Endothelial cell of umbilical vein (primary cell): ENCODE measurements at regions of chr1 and their contacts with region 1.

Region 1: GRCh38 chr1:21508580-21509350 is 458 bp upstream of the ALPL start:
- DNase-seq: peak; percentile 8
- H3K4me3 ChIP-seq: no peak overlapping the region
- H3K27ac ChIP-seq: no peak overlapping the region
- H3K4me1 ChIP-seq: peaks cover 3% of the 10 kb centered on the region
- H3K27me3 ChIP-seq: peaks cover 51% of the 10 kb centered on the region in 2 experiments
- CTCF ChIP-seq: peak; percentile 35 to 76
- POLR2A ChIP-seq: no peak

Region 2: DNA sequence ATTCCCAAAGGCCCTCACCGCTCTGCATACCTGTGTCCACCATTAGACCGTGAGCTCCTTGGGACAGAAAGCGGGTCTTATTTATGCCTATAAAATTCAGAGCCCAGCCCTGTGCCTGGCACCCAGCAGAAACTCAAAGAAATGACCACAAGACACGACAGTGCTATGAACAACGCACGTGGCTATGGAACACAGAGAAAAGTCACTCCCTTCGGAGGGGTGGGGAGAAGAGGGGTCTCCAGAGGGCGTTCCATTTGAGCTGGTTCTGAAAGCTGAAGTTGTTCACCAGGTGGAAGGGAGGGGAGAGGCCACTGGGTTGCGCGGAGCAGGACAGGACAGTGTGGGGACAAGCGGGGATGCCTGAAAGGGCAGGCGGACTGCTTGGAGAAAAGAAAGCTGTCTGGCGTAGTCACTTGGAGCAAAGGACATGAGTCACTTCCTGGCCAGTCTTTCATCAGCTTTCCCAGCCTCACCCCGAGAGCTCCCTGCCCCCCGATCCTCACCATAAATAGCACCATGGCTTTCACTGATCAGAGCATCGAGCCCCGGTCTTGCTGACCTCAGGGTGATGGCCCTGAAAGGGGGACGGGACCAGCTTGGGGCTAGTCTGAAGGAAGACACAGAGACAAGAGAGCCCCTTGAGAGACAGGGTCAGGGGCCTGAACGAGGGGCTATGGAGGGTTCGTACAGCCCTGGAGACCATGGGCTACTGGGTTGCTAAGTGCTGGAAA is 247.0 kb before region 1 on chr1:
- CTCF ChIA-PET with region 1: no interaction called
- POLR2A ChIA-PET with region 1: no interaction called
- dilution Hi-C with region 1: no loop called
- intact Hi-C with region 1: no loop called
- DNase-seq: peak; percentile 96
- H3K4me3 ChIP-seq: no peak overlapping the region
- H3K27ac ChIP-seq: peak overlapping the region; percentile 92
- H3K4me1 ChIP-seq: peaks cover 54% of the 10 kb centered on the region
- H3K27me3 ChIP-seq: no peaks in the 10 kb centered on the region
- CTCF ChIP-seq: no peak
- POLR2A ChIP-seq: peak; percentile 44

Region 3: DNA sequence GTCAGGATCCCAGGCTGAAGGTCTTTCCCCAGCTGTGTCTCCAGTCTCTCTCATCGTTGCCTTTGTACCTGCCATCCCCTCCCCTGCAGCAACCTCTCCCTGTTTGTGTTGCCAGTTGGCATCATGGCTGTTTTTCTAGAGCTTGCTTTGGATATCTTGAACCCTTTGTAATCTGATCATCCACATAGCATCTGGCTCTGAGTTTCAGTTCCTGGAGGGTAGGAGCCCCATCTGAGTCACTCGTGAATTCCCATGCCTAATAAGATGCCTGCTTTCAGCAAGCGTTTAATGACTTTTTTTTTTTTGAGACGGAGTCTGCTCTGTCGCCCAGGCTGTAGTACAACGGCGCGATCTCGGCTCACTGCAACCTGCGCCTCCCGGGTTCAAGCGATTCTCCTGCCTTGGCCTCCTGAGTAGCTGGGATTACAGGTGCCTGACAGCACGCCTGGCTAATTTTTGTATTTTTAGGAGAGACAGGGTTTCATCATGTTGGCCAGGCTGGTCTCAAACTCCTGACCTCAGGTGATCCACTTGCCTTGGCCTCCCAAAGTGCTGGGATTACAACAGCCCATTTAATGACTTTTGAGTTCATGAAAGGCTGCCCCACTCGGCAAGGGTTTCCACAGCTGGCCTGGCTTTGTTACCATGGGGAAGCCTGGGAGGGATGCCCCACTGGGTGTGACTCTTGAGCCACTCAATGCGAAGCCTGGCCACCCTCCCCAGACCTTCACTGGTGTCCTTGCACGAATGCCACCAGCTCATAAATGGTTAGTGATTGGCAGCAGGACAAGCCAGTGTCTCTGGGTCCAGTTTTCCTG is 12.3 kb after region 1 on chr1:
- CTCF ChIA-PET with region 1: interaction called, 18 read pairs
- POLR2A ChIA-PET with region 1: no interaction called
- dilution Hi-C with region 1: no loop called
- intact Hi-C with region 1: no loop called
- DNase-seq: no peak
- H3K4me3 ChIP-seq: no peak overlapping the region
- H3K27ac ChIP-seq: no peak overlapping the region
- H3K4me1 ChIP-seq: no peaks in the 10 kb centered on the region
- H3K27me3 ChIP-seq: peaks cover 2 to 3% of the 10 kb centered on the region in 2 experiments
- CTCF ChIP-seq: no peak
- POLR2A ChIP-seq: no peak

Region 4: GRCh38 chr1:21562896-21563295 is 54.1 kb after region 1 on chr1:
- CTCF ChIA-PET with region 1: no interaction called
- POLR2A ChIA-PET with region 1: no interaction called
- dilution Hi-C with region 1: no loop called
- intact Hi-C with region 1: no loop called
- DNase-seq: no peak
- H3K4me3 ChIP-seq: no peak overlapping the region
- H3K27ac ChIP-seq: no peak overlapping the region
- H3K4me1 ChIP-seq: no peaks in the 10 kb centered on the region
- H3K27me3 ChIP-seq: no peaks in the 10 kb centered on the region
- CTCF ChIP-seq: no peak
- POLR2A ChIP-seq: no peak

Region 5: GRCh38 chr1:21573971-21574465 is 65.3 kb after region 1 on chr1:
- CTCF ChIA-PET with region 1: interaction called, 3 read pairs
- POLR2A ChIA-PET with region 1: no interaction called
- dilution Hi-C with region 1: no loop called
- intact Hi-C with region 1: loop called (anchors 1 kb)
- DNase-seq: peak; percentile 99
- H3K4me3 ChIP-seq: no peak overlapping the region
- H3K27ac ChIP-seq: peak overlapping the region; percentile 87
- H3K4me1 ChIP-seq: peaks cover 17% of the 10 kb centered on the region
- H3K27me3 ChIP-seq: peaks cover 0 to 8% of the 10 kb centered on the region in 2 experiments
- CTCF ChIP-seq: peak; percentile 34 to 50
- POLR2A ChIP-seq: peak; percentile 31

Region 6: GRCh38 chr1:21594935-21595897 is 86.5 kb after region 1 on chr1:
- CTCF ChIA-PET with region 1: interaction called, 45 read pairs
- POLR2A ChIA-PET with region 1: no interaction called
- dilution Hi-C with region 1: no loop called
- intact Hi-C with region 1: loop called (anchors 1 kb)
- DNase-seq: peak; percentile 49
- H3K4me3 ChIP-seq: no peak overlapping the region
- H3K27ac ChIP-seq: no peak overlapping the region
- H3K4me1 ChIP-seq: no peaks in the 10 kb centered on the region
- H3K27me3 ChIP-seq: peaks cover 0 to 5% of the 10 kb centered on the region in 2 experiments
- CTCF ChIP-seq: peak; percentile 67 to 82
- POLR2A ChIP-seq: no peak

Region 7: GRCh38 chr1:21659099-21659923 is 150.5 kb after region 1 on chr1:
- CTCF ChIA-PET with region 1: interaction called, 4 read pairs
- POLR2A ChIA-PET with region 1: no interaction called
- dilution Hi-C with region 1: no loop called
- intact Hi-C with region 1: loop called (anchors 2 kb)
- DNase-seq: peak; percentile 70
- H3K4me3 ChIP-seq: no peak overlapping the region
- H3K27ac ChIP-seq: no peak overlapping the region
- H3K4me1 ChIP-seq: no peaks in the 10 kb centered on the region
- H3K27me3 ChIP-seq: peaks cover 7% of the 10 kb centered on the region in 2 experiments
- CTCF ChIP-seq: peak; percentile 87 to 92
- POLR2A ChIP-seq: no peak

Region 8: GRCh38 chr1:21834094-21834493 is 325.3 kb after region 1 on chr1:
- CTCF ChIA-PET with region 1: no interaction called
- POLR2A ChIA-PET with region 1: no interaction called
- dilution Hi-C with region 1: no loop called
- intact Hi-C with region 1: no loop called
- DNase-seq: no peak
- H3K4me3 ChIP-seq: no peak overlapping the region
- H3K27ac ChIP-seq: no peak overlapping the region
- H3K4me1 ChIP-seq: no peaks in the 10 kb centered on the region
- H3K27me3 ChIP-seq: no peaks in the 10 kb centered on the region
- CTCF ChIP-seq: peak in 1 of 2 donors; percentile 10
- POLR2A ChIP-seq: no peak

Region 9: GRCh38 chr1:22052115-22053016 is 543.6 kb after region 1 on chr1 and contains the start of gene CDC42:
- CTCF ChIA-PET with region 1: no interaction called
- POLR2A ChIA-PET with region 1: no interaction called
- dilution Hi-C with region 1: no loop called
- intact Hi-C with region 1: no loop called
- DNase-seq: peak; percentile 94
- H3K4me3 ChIP-seq: peak within 1 kb of the TSS; percentile 37 to 94 (median 76)
- H3K27ac ChIP-seq: peak within 1 kb of the TSS; percentile 85
- H3K4me1 ChIP-seq: peaks cover 28% of the 10 kb centered on the region
- H3K27me3 ChIP-seq: no peaks in the 10 kb centered on the region
- CTCF ChIP-seq: no peak
- POLR2A ChIP-seq: peak; percentile 97
- total RNA-seq, gene CDC42: 379 and 381 TPM in 2 replicates